HEK293 (cell line): ENCODE measurements at regions of chr20 and their contacts with region 1.

Region 1: DNA sequence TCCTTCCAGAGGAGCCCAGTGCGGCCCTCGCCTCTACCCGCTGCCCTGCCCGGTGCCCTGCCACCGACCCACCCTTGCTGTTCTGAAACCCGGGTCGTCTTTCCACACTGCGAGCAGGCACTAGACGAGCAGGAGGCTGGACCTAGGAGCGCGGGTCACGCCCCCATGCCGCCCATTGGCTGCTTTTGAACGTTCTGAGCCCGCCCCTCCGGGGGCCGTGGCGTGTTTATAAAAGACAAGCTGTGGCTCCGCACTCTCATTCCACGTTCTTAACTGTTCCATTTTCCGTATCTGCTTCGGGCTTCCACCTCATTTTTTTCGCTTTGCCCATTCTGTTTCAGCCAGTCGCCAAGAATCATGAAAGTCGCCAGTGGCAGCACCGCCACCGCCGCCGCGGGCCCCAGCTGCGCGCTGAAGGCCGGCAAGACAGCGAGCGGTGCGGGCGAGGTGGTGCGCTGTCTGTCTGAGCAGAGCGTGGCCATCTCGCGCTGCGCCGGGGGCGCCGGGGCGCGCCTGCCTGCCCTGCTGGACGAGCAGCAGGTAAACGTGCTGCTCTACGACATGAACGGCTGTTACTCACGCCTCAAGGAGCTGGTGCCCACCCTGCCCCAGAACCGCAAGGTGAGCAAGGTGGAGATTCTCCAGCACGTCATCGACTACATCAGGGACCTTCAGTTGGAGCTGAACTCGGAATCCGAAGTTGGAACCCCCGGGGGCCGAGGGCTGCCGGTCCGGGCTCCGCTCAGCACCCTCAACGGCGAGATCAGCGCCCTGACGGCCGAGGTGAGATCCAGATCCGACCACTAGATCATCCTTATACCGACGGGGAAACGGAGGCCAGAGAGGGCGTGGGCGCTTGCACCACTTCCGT is at the start of gene ID1:
- H3K4me3 ChIP-seq: peak within 1 kb of the TSS; percentile 70
- H3K27ac ChIP-seq: peak within 1 kb of the TSS; percentile 80
- H3K4me1 ChIP-seq: peaks cover 15% of the 10 kb centered on the region
- CTCF ChIP-seq: peak; percentile 32; the same call in 1 of the 2 replicates

Region 2: GRCh38 chr20:31560094-31560899 is 45.0 kb before region 1 on chr20:
- CTCF ChIA-PET with region 1: interaction called, 1,204 read pairs
- POLR2A ChIA-PET with region 1: interaction called, 23 read pairs
- H3K4me3 ChIP-seq: no peak overlapping the region
- H3K27ac ChIP-seq: no peak overlapping the region
- H3K4me1 ChIP-seq: no peaks in the 10 kb centered on the region
- CTCF ChIP-seq: peak; percentile 68

Region 3: GRCh38 chr20:31572701-31573554 is 32.3 kb before region 1 on chr20:
- CTCF ChIA-PET with region 1: interaction called, 1,204 read pairs
- POLR2A ChIA-PET with region 1: interaction called, 255 read pairs
- H3K4me3 ChIP-seq: peak overlapping the region; percentile 41
- H3K27ac ChIP-seq: peak overlapping the region; percentile 88
- H3K4me1 ChIP-seq: peaks cover 8% of the 10 kb centered on the region
- CTCF ChIP-seq: no peak

Region 4: GRCh38 chr20:31578448-31579138 is 26.7 kb before region 1 on chr20:
- CTCF ChIA-PET with region 1: interaction called, 1,204 read pairs
- POLR2A ChIA-PET with region 1: interaction called, 255 read pairs
- H3K4me3 ChIP-seq: no peak overlapping the region
- H3K27ac ChIP-seq: no peak overlapping the region
- H3K4me1 ChIP-seq: peaks cover under 1% of the 10 kb centered on the region
- CTCF ChIP-seq: no peak

Region 5: GRCh38 chr20:31587545-31588389 is 17.5 kb before region 1 on chr20:
- CTCF ChIA-PET with region 1: interaction called, 6 read pairs
- POLR2A ChIA-PET with region 1: interaction called, 30 read pairs
- H3K4me3 ChIP-seq: no peak overlapping the region
- H3K27ac ChIP-seq: no peak overlapping the region
- H3K4me1 ChIP-seq: peaks cover 3% of the 10 kb centered on the region; the same call in 1 of the 2 replicates
- CTCF ChIP-seq: no peak

Region 6: GRCh38 chr20:31691646-31692275 is 86.5 kb after region 1 on chr20:
- CTCF ChIA-PET with region 1: no interaction called
- POLR2A ChIA-PET with region 1: no interaction called
- H3K4me3 ChIP-seq: no peak overlapping the region
- H3K27ac ChIP-seq: peak overlapping the region; percentile 59
- H3K4me1 ChIP-seq: peaks cover 17% of the 10 kb centered on the region
- CTCF ChIP-seq: no peak

Region 7: DNA sequence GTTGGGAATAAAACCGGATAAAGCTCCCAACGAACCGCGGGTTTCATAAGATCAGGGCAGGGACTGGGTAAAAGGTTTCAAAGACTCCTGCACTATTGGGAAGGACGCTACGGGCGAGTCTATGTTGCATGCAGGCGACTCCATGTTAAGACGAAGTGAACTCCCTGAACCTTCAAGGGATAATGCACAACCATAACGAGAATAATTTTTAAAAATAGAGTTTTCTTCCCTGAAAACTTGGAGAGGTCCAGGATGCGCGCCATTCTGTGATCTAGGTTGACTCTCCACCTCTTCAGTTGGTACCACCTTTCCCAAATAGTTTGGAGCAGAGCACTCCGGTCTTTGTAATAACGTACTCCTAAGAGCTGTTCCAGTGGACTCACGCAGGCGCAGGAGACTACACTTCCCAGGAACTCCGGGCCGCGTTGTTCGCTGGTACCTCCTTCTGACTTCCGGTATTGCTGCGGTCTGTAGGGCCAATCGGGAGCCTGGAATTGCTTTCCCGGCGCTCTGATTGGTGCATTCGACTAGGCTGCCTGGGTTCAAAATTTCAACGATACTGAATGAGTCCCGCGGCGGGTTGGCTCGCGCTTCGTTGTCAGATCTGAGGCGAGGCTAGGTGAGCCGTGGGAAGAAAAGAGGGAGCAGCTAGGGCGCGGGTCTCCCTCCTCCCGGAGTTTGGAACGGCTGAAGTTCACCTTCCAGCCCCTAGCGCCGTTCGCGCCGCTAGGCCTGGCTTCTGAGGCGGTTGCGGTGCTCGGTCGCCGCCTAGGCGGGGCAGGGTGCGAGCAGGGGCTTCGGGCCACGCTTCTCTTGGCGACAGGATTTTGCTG is 133.7 kb after region 1 on chr20 and contains the start of gene TPX2:
- CTCF ChIA-PET with region 1: no interaction called
- POLR2A ChIA-PET with region 1: interaction called, 10 read pairs
- H3K4me3 ChIP-seq: peak within 1 kb of the TSS; percentile 73
- H3K27ac ChIP-seq: peak within 1 kb of the TSS; percentile 75
- H3K4me1 ChIP-seq: no peaks in the 10 kb centered on the region; the same call in 1 of the 2 replicates
- CTCF ChIP-seq: peak; percentile 91